ENCODE measurements at regions of chr2 and their contacts with region 1.

Region 1: GRCh38 chr2:194411221-194411620 is 1245.8 kb upstream of the SLC39A10 start:
- DNase-seq: no peak
- H3K4me3 Mint-ChIP-seq: no peak overlapping the region
- H3K27ac Mint-ChIP-seq: no peak overlapping the region
- H3K4me1 Mint-ChIP-seq: no peaks in the 10 kb centered on the region
- H3K27me3 Mint-ChIP-seq: no peaks in the 10 kb centered on the region
- CTCF ChIP-seq: no peak

Region 2: GRCh38 chr2:195520671-195521155 is 1109.5 kb after region 1 on chr2:
- CTCF ChIA-PET with region 1: interaction called, 15 read pairs
- intact Hi-C with region 1: no loop called
- DNase-seq: no peak
- H3K4me3 Mint-ChIP-seq: no peak overlapping the region
- H3K27ac Mint-ChIP-seq: no peak overlapping the region
- H3K4me1 Mint-ChIP-seq: peaks cover 9% of the 10 kb centered on the region
- H3K27me3 Mint-ChIP-seq: no peaks in the 10 kb centered on the region
- CTCF ChIP-seq: no peak

Measured in Calu3 (cell line).